IMR-90 (cell line): ENCODE measurements at regions of chr4 and their contacts with region 1.

Region 1: DNA sequence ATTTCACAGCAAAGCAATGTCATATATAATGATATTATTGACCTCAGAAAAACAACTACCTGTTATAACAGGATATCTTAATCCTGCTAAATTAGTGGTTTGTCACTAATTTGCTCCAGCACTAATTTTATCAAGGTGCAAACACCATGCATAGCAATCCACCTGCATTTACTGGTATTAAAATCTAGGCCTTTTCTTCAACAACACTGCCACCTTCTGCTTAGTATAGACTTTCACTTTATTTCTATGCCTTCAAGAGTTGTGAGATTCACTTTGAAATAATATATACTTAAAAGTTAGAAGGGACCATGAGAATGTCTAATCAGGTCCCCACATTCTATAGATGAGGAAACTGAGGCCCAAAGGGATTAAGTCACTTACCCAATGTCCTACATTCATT is 82.1 kb upstream of the IQCM start:
- DNase-seq: peak; percentile 26
- ATAC-seq: peak; percentile 77
- H3K4me3 ChIP-seq: no peak overlapping the region
- H3K27ac ChIP-seq: no peak overlapping the region
- H3K4me1 ChIP-seq: no peaks in the 10 kb centered on the region
- H3K27me3 ChIP-seq: no peaks in the 10 kb centered on the region
- CTCF ChIP-seq: peak; percentile 59
- POLR2A ChIP-seq: no peak
- RAD21 ChIP-seq: peak; percentile 73

Region 2: DNA sequence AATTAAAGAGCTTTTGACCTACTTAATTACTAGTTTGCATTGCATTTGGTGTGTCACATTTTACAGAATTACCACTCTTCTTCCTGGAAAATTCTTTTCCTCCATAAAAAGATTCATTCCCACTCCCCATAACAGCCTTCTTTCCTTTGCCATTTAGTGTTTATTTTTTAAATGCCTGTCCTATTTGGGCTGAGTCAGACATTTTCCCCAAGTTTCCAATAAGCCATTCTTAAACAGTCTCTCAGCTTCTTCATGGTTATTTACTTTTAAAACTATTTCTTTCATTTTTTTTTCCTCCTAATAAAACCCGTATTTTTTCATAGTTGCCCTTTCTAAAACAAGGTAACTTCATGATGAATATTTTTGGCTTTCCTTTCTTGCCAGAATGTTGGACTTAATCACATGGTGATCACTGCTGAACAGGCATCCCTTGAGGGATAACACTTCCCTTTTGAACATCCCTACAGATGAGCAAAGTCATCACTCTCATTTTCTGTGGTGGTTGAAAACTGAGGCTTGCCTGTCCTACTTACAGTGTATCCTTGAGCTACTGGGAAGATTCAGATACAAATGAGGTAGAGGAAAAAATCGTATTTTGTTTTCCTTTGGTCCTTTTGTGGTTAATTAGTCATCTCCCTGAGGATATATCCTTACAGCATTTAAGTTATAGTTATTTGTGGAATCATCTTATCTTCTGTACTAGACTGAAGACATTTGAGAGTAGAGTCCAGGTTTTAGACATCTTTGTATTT is 935.1 kb before region 1 on chr4:
- CTCF ChIA-PET with region 1: no interaction called
- POLR2A ChIA-PET with region 1: no interaction called
- dilution Hi-C with region 1: no loop called
- in situ Hi-C with region 1: loop called (anchors 25 kb)
- intact Hi-C with region 1: no loop called
- DNase-seq: peak; percentile 73
- ATAC-seq: peak; percentile 84
- H3K4me3 ChIP-seq: no peak overlapping the region
- H3K27ac ChIP-seq: no peak overlapping the region
- H3K4me1 ChIP-seq: no peaks in the 10 kb centered on the region; the same call in 1 of the 2 replicates
- H3K27me3 ChIP-seq: no peaks in the 10 kb centered on the region
- CTCF ChIP-seq: no peak
- POLR2A ChIP-seq: no peak
- RAD21 ChIP-seq: no peak

Region 3: DNA sequence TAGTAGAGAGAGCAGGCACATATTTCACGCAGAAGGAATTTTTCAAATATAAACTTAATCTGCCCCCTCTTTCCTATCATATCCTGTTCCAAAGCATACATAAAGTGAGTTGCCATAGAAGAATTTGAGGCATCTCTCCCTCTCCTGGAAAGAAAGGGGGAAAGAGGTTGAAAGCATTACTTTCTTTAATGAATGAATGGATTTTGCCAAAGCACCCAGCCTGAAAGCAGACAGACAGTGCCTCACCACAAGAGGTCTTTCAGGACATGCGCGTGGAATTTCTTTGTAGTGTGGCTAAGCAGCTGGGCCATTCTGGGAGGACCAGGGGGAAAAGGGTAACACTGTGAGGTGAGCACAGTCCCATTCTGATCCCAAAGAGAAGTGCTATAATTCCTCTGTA is 733.5 kb before region 1 on chr4:
- CTCF ChIA-PET with region 1: no interaction called
- POLR2A ChIA-PET with region 1: no interaction called
- dilution Hi-C with region 1: no loop called
- in situ Hi-C with region 1: no loop called
- intact Hi-C with region 1: loop called (anchors 5 kb)
- DNase-seq: peak; percentile 92
- ATAC-seq: peak; percentile 81
- H3K4me3 ChIP-seq: no peak overlapping the region
- H3K27ac ChIP-seq: peak overlapping the region; percentile 65
- H3K4me1 ChIP-seq: peaks cover 16% of the 10 kb centered on the region
- H3K27me3 ChIP-seq: no peaks in the 10 kb centered on the region
- CTCF ChIP-seq: 0 out of 2 replicates have a peak, but pooled peaks have one; percentile 16
- POLR2A ChIP-seq: no peak
- RAD21 ChIP-seq: peak; percentile 32

Region 4: DNA sequence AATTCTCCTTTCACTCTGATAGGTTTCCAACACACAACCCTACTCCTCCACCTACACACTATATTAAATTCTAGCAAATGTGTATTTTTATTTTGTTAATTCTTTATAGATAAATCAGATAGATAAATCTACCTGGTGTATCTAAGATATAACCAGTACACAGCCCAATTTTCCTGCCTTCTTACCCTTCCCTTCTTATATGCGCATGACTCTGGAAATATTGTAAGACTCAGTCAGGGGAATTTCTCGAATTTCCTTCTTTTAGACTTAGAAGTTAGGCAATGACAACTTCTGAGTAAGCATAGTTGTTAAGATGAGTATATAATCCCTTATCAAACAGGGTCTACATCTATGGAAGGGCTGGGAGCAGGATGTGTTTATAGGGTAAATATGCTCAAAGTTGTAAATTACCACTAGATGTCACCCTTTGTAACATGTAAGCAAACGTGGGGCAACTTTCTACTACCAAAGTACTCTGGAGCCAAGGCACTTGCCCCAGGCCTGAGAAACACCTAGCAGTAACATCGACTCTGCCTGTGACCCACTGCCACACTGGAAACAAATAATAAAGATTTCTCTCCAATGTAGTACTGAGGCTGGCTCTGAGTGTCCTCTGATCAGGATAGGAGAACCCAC is 526.9 kb before region 1 on chr4:
- CTCF ChIA-PET with region 1: interaction called, 5 read pairs
- POLR2A ChIA-PET with region 1: no interaction called
- dilution Hi-C with region 1: no loop called
- in situ Hi-C with region 1: loop called (anchors 5 kb)
- intact Hi-C with region 1: loop called (anchors 1 kb)
- DNase-seq: peak; percentile 63
- ATAC-seq: peak; percentile 75
- H3K4me3 ChIP-seq: no peak overlapping the region
- H3K27ac ChIP-seq: no peak overlapping the region
- H3K4me1 ChIP-seq: no peaks in the 10 kb centered on the region
- H3K27me3 ChIP-seq: no peaks in the 10 kb centered on the region
- CTCF ChIP-seq: peak; percentile 53
- POLR2A ChIP-seq: no peak
- RAD21 ChIP-seq: peak; percentile 68

Region 5: GRCh38 chr4:149825336-149825735 is 72.4 kb before region 1 on chr4:
- CTCF ChIA-PET with region 1: no interaction called
- POLR2A ChIA-PET with region 1: no interaction called
- dilution Hi-C with region 1: no loop called
- in situ Hi-C with region 1: no loop called
- intact Hi-C with region 1: no loop called
- DNase-seq: no peak
- ATAC-seq: no peak
- H3K4me3 ChIP-seq: no peak overlapping the region
- H3K27ac ChIP-seq: no peak overlapping the region
- H3K4me1 ChIP-seq: peaks cover 2% of the 10 kb centered on the region; the same call in 1 of the 2 replicates
- H3K27me3 ChIP-seq: no peaks in the 10 kb centered on the region
- CTCF ChIP-seq: no peak
- POLR2A ChIP-seq: no peak
- RAD21 ChIP-seq: no peak